K562 (cell line): ENCODE measurements at regions of chr14 and their contacts with region 1.

Region 1: DNA sequence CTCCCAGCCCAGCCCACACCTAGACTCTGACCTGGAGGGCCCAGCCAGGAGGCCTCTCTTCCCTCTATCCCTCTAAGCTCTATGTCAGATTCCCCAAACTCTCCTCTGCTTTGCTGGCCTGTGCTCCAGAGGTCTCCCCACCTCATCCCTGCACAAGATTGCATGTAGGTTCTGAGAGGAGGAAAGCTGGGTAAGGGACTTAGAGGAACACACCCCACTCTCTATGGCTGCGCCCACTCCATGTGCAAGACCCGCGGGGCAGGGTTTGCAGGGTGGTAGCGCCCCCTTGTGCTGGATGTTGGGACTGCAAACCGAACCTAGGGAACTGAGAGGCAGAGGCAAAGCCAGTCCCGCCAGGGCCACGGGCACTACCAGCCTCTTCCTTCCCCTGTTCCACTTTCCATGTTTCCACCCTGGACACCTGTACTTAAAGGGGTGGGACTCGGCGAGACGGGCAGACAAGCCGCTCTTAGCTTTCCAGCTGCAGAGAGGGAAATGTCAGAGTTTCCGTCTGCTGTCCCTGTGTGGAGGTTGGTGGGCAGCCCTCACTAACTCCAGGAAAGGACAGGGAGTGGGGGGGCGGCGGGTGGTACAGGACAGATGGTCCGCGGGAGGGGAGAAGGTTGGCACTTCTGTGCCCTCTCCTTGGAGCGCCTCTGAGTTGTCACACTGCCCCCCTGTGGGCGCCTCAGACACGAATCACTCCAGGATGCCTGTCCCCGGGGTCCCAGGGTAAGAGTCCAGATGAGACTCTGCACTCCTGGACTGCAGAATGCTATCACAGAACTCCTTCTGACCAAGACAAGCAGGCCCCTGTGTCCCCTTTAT is 16.8 kb downstream of the MMP14 start:
- DNase-seq: peak; percentile 81 to 88 (median 86)
- ATAC-seq: peak; percentile 95
- H3K4me3 ChIP-seq: peak overlapping the region; percentile 47
- H3K27ac ChIP-seq: peak overlapping the region; percentile 86
- H3K4me1 ChIP-seq: peaks cover under 1 to 23% of the 10 kb centered on the region in 2 experiments; a peak in 3 of 5 replicates
- H3K27me3 ChIP-seq: no peaks in the 10 kb centered on the region
- CTCF ChIP-seq: peak; percentile 94 to 97 (median 95)
- EP300 ChIP-seq: no peak
- POLR2A ChIP-seq: no peak
- RAD21 ChIP-seq: peak; percentile 97 to 99

Region 2: GRCh38 chr14:22556990-22557623 is 296.0 kb before region 1 on chr14:
- CTCF ChIA-PET with region 1: interaction called, 53 read pairs
- POLR2A ChIA-PET with region 1: no interaction called
- in situ Hi-C with region 1: loop called (anchors 10 kb)
- intact Hi-C with region 1: loop called (anchors 2 kb)
- DNase-seq: peak; percentile 80 to 88 (median 82)
- ATAC-seq: peak; percentile 88
- H3K4me3 ChIP-seq: 0 out of 2 replicates have a peak overlapping the region, but pooled peaks have one; percentile 21
- H3K27ac ChIP-seq: peak overlapping the region; percentile 71
- H3K4me1 ChIP-seq: peaks cover 32 to 42% of the 10 kb centered on the region in 2 experiments
- H3K27me3 ChIP-seq: no peaks in the 10 kb centered on the region
- CTCF ChIP-seq: peak; percentile 75 to 98 (median 90); a peak in 5 of 6 replicates
- EP300 ChIP-seq: no peak
- POLR2A ChIP-seq: no peak
- RAD21 ChIP-seq: peak; percentile 93 to 96

Region 3: DNA sequence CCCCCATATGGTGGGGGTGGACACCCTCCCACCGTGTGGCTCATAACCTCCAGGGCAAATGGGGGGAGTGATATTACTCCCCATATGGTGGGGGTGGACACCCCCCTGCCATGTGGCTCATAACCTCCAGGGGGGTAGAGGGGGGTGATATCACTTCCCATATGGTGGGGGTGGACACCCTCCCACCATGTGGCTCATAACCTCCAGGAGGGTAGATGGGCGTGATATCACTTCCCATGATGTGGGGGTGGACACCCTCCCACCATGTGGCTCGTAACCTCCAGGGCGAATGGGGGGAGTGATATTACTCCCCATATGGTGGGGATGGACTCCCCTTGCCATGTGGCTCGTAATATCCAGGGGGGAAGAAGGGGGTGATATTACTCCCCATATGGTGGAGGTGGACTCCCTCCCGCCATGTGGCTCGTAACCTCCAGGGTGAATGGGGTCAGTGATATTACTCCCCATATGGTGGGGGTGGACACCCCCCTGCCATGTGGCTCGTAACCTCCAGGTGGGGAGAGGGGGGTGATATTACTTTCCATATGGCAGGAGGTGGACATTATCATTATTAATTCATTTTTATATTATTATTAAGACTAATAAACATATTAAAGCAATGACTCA is 137.9 kb before region 1 on chr14:
- CTCF ChIA-PET with region 1: no interaction called
- POLR2A ChIA-PET with region 1: no interaction called
- in situ Hi-C with region 1: no loop called
- intact Hi-C with region 1: no loop called
- DNase-seq: peak; percentile 59 to 83 (median 62)
- ATAC-seq: peak; percentile 67
- H3K4me3 ChIP-seq: no peak overlapping the region
- H3K27ac ChIP-seq: peak overlapping the region; percentile 90
- H3K4me1 ChIP-seq: peaks cover 8 to 10% of the 10 kb centered on the region in 2 experiments; a peak in 4 of 5 replicates
- H3K27me3 ChIP-seq: no peaks in the 10 kb centered on the region
- CTCF ChIP-seq: no peak
- EP300 ChIP-seq: peak; percentile 20; the same call in 1 of the 2 replicates
- POLR2A ChIP-seq: no peak
- RAD21 ChIP-seq: no peak

Region 4: GRCh38 chr14:22781586-22781991 is 71.6 kb before region 1 on chr14:
- CTCF ChIA-PET with region 1: interaction called, 68 read pairs
- POLR2A ChIA-PET with region 1: no interaction called
- in situ Hi-C with region 1: loop called (anchors 5 kb)
- intact Hi-C with region 1: loop called (anchors 1 kb)
- DNase-seq: no peak
- ATAC-seq: no peak
- H3K4me3 ChIP-seq: no peak overlapping the region
- H3K27ac ChIP-seq: no peak overlapping the region
- H3K4me1 ChIP-seq: peaks cover 0 to 8% of the 10 kb centered on the region in 2 experiments; a peak in 3 of 5 replicates
- H3K27me3 ChIP-seq: no peaks in the 10 kb centered on the region
- CTCF ChIP-seq: no peak
- EP300 ChIP-seq: no peak
- POLR2A ChIP-seq: no peak
- RAD21 ChIP-seq: no peak

Region 5: GRCh38 chr14:22900081-22900799 is 47.1 kb after region 1 on chr14:
- CTCF ChIA-PET with region 1: interaction called, 8 read pairs
- POLR2A ChIA-PET with region 1: interaction called, 3 read pairs
- in situ Hi-C with region 1: no loop called
- intact Hi-C with region 1: loop called (anchors 1 kb)
- DNase-seq: peak; percentile 71 to 91 (median 79)
- ATAC-seq: peak; percentile 80
- H3K4me3 ChIP-seq: no peak overlapping the region
- H3K27ac ChIP-seq: no peak overlapping the region
- H3K4me1 ChIP-seq: peaks cover 5 to 39% of the 10 kb centered on the region in 2 experiments; a peak in 2 of 5 replicates
- H3K27me3 ChIP-seq: no peaks in the 10 kb centered on the region
- CTCF ChIP-seq: peak; percentile 73 to 84 (median 83)
- EP300 ChIP-seq: no peak
- POLR2A ChIP-seq: no peak
- RAD21 ChIP-seq: peak; percentile 57 to 68

Region 6: DNA sequence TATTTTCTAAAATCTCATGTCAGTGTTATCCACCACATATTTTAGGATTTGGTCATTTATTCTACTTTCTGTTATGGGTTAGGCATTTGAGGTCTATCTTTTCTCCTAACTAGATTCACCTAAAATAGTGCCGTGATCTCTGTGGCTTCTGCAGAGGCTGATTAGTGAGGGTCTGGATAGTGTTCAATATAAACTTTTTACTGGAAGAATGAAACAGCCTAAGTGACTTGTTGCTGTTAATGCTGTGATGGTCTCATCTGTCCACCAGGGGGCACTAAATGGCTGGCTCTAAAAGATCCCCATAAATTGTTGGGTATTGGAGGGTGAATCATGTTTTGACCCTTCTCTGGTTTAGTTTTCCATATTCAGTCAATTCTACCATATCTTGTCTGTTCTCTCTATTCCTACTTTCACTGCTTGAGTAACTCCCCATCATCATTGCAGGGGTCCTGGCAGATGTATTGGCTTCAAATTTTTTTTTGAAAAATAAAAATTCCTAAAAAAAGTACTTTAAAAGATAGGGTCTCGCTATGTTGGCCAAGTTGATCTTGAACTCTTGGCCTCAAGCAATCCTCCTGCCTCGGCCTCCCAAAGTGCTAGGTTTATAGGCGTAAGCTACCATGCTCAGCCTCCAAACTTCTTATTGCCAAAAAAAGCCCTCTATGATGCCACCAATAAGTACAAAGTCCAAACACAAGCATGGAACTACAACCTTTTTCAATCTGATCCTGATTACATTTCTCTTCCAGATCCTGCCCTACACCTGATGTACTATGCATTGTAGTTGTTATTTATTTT is 475.0 kb after region 1 on chr14:
- CTCF ChIA-PET with region 1: interaction called, 10 read pairs
- POLR2A ChIA-PET with region 1: no interaction called
- in situ Hi-C with region 1: no loop called
- intact Hi-C with region 1: loop called (anchors 1 kb)
- DNase-seq: peak; percentile 66 to 83 (median 74)
- ATAC-seq: peak; percentile 83
- H3K4me3 ChIP-seq: no peak overlapping the region
- H3K27ac ChIP-seq: no peak overlapping the region
- H3K4me1 ChIP-seq: peaks cover 2 to 3% of the 10 kb centered on the region in 2 experiments; a peak in 4 of 5 replicates
- H3K27me3 ChIP-seq: no peaks in the 10 kb centered on the region
- CTCF ChIP-seq: peak; percentile 81 to 94 (median 82)
- EP300 ChIP-seq: no peak
- POLR2A ChIP-seq: no peak
- RAD21 ChIP-seq: peak; percentile 91 to 95